Mammary epithelial cell (primary cell): ENCODE measurements at regions of chr4 and their contacts with region 1.

Region 1: GRCh38 chr4:84258905-84259830 is 239.9 kb downstream of the NKX6-1 start:
- DNase-seq: peak; percentile 21
- H3K4me3 ChIP-seq: no peak overlapping the region
- H3K27ac ChIP-seq: no peak overlapping the region
- H3K4me1 ChIP-seq: no peaks in the 10 kb centered on the region
- H3K27me3 ChIP-seq: no peaks in the 10 kb centered on the region
- CTCF ChIP-seq: peak; percentile 79 to 82

Region 2: GRCh38 chr4:83639849-83640493 is 619.2 kb before region 1 on chr4:
- CTCF ChIA-PET with region 1: interaction called, 4 read pairs
- dilution Hi-C with region 1: no loop called
- in situ Hi-C with region 1: no loop called
- intact Hi-C with region 1: loop called (anchors 1 kb)
- DNase-seq: peak; percentile 64
- H3K4me3 ChIP-seq: no peak overlapping the region
- H3K27ac ChIP-seq: no peak overlapping the region
- H3K4me1 ChIP-seq: no peaks in the 10 kb centered on the region
- H3K27me3 ChIP-seq: no peaks in the 10 kb centered on the region
- CTCF ChIP-seq: peak; percentile 77 to 81

Region 3: DNA sequence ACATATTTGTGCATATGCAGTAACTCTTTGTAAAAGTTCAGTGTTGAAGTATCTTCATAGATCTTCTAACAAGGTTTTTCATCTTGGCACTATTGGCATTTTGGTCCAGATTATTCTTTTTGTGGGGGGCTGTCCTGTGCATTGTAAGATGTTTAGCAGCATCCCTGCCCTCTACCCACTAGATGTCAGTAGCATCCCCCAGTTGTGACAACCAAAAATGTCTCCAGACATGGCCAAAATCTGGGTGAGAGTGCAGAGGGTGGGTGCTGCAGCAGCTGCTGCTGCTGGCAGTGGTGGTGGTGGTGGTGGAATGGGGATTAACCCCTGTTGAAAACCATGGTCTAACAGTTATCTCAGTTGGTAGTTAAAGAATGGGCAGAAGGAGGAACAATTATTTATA is 353.2 kb before region 1 on chr4:
- CTCF ChIA-PET with region 1: no interaction called
- dilution Hi-C with region 1: no loop called
- in situ Hi-C with region 1: no loop called
- intact Hi-C with region 1: loop called (anchors 2 kb)
- DNase-seq: no peak
- H3K4me3 ChIP-seq: no peak overlapping the region
- H3K27ac ChIP-seq: no peak overlapping the region
- H3K4me1 ChIP-seq: no peaks in the 10 kb centered on the region
- H3K27me3 ChIP-seq: peaks cover 13% of the 10 kb centered on the region
- CTCF ChIP-seq: peak in 1 of 2 donors; percentile 28

Region 4: GRCh38 chr4:84159762-84160161 is 99.4 kb before region 1 on chr4:
- CTCF ChIA-PET with region 1: no interaction called
- dilution Hi-C with region 1: no loop called
- in situ Hi-C with region 1: no loop called
- intact Hi-C with region 1: loop called (anchors 10 kb)
- DNase-seq: no peak
- H3K4me3 ChIP-seq: no peak overlapping the region
- H3K27ac ChIP-seq: no peak overlapping the region
- H3K4me1 ChIP-seq: no peaks in the 10 kb centered on the region
- H3K27me3 ChIP-seq: peaks cover 10% of the 10 kb centered on the region
- CTCF ChIP-seq: peak; percentile 16 to 34

Region 5: DNA sequence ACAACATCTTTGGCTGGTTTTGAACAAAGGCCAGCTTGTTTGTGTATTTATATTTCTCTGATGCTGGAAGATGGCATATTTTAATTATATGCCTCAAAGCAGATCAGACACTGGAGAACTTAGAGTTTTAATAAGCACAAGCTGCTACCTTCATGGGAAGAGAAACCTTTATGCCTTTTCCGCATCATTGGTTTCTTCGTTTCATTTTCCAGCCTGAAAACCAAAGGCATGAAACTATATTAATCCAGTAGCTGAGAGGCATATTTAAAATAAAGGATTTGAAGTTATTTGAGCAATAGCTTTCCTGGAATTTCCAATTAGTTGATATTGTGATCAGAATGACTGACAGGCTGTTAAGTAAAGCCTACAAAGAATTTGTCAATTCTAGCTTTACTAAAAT is 1356.8 kb after region 1 on chr4:
- CTCF ChIA-PET with region 1: no interaction called
- dilution Hi-C with region 1: no loop called
- in situ Hi-C with region 1: no loop called
- intact Hi-C with region 1: no loop called
- DNase-seq: no peak
- H3K4me3 ChIP-seq: no peak overlapping the region
- H3K27ac ChIP-seq: no peak overlapping the region
- H3K4me1 ChIP-seq: no peaks in the 10 kb centered on the region
- H3K27me3 ChIP-seq: no peaks in the 10 kb centered on the region
- CTCF ChIP-seq: no peak